ENCODE measurements at regions of chr3 and their contacts with region 1.

Region 1: GRCh38 chr3:142165194-142165593 is 15.8 kb upstream of the TFDP2 start:
- DNase-seq: no peak
- H3K4me3 ChIP-seq: no peak overlapping the region
- H3K27ac ChIP-seq: no peak overlapping the region
- H3K4me1 ChIP-seq: peaks cover 4 to 12% (median 10%) of the 10 kb centered on the region in 4 experiments; a peak in 5 of 7 replicates
- H3K27me3 ChIP-seq: no peaks in the 10 kb centered on the region
- CTCF ChIP-seq: no peak
- EP300 ChIP-seq: no peak
- POLR2A ChIP-seq: no peak
- RAD21 ChIP-seq: no peak

Region 2: GRCh38 chr3:142098964-142099363 is 66.2 kb before region 1 on chr3:
- CTCF ChIA-PET with region 1: no interaction called
- POLR2A ChIA-PET with region 1: no interaction called
- DNase-seq: no peak
- H3K4me3 ChIP-seq: no peak overlapping the region
- H3K27ac ChIP-seq: no peak overlapping the region
- H3K4me1 ChIP-seq: no peaks in the 10 kb centered on the region
- H3K27me3 ChIP-seq: peaks cover 0 to 1% (median 0%) of the 10 kb centered on the region in 4 experiments; a peak in 1 of 7 replicates
- CTCF ChIP-seq: no peak
- EP300 ChIP-seq: no peak
- POLR2A ChIP-seq: no peak
- RAD21 ChIP-seq: no peak

Region 3: DNA sequence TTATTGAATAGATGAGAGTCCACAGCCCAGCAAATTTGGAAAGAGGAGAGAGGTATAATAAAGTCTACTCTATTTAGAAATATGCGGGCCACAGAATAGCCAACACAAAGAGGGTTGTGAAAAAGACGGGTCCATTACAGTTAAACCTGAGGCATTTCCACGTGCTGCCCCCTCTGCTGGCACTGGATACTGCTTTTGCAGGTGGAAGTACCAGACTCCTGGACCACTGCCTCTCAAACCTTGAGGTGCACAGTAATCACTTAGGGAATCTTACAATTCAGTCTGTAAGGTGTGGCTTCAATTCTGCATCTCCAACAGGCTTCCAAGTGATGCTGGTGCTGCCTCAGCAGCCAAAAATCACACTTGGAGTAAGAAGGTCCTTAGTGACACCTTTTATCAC is 12.8 kb before region 1 on chr3:
- CTCF ChIA-PET with region 1: interaction called, 17 read pairs
- POLR2A ChIA-PET with region 1: interaction called, 6 read pairs
- DNase-seq: no peak
- H3K4me3 ChIP-seq: no peak overlapping the region
- H3K27ac ChIP-seq: no peak overlapping the region
- H3K4me1 ChIP-seq: peaks cover 0 to 2% (median 1%) of the 10 kb centered on the region in 4 experiments; a peak in 3 of 7 replicates
- H3K27me3 ChIP-seq: no peaks in the 10 kb centered on the region; a peak in 1 of 7 replicates
- CTCF ChIP-seq: peak; percentile 43 to 59 (median 57)
- EP300 ChIP-seq: no peak
- POLR2A ChIP-seq: no peak
- RAD21 ChIP-seq: peak; percentile 30 to 44; a peak in 3 of 4 replicates

Region 4: GRCh38 chr3:142366436-142366835 is 201.2 kb after region 1 on chr3:
- CTCF ChIA-PET with region 1: no interaction called
- POLR2A ChIA-PET with region 1: no interaction called
- DNase-seq: no peak
- H3K4me3 ChIP-seq: no peak overlapping the region
- H3K27ac ChIP-seq: no peak overlapping the region
- H3K4me1 ChIP-seq: no peaks in the 10 kb centered on the region
- H3K27me3 ChIP-seq: no peaks in the 10 kb centered on the region
- CTCF ChIP-seq: peak in 1 of 3 experiments; percentile 29; a peak in 1 of 4 replicates
- EP300 ChIP-seq: no peak
- POLR2A ChIP-seq: no peak
- RAD21 ChIP-seq: peak; percentile 35 to 48; a peak in 3 of 4 replicates